OCI-LY7 (cell line): ENCODE measurements at regions of chr10 and their contacts with region 1.

Region 1: DNA sequence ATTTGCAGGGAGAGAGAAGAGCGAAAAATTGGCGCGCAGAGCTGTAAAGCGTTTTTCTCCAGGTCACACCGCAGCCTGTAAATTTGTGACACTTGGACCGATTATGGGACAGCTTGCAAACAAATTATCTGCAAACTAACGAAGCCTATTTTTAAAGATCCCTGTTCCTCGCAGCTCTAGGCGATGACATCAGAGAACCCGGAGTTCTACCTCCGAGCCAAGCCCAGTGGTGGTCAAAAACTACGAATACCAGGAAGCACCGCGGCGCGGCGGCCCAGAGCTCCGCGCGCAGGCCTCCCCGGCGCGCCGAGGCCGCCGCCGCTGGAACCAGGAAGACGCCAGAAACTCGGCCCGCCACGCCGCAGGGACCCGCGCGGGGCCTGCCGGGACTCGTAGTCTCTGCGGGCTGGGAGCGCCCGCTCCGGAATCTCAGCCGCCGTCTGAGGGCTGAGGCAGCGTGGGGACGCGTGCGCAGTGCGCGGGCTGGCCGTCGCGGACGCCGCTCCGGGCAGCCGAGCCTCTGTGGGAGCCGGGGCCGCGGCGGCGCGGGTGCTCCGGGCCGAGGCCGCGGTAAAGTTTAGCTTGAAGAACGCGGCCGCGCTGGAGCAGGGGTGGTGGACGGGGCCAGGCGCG is at the start of gene PLEKHA1:
- DNase-seq: peak; percentile 94
- H3K4me3 ChIP-seq: peak within 1 kb of the TSS; percentile 79
- H3K27ac ChIP-seq: no peak within 1 kb of the TSS
- H3K4me1 ChIP-seq: peaks cover 13% of the 10 kb centered on the region
- CTCF ChIP-seq: no peak
- total RNA-seq, gene PLEKHA1: 4.2 and 7.3 TPM in 2 replicates

Region 2: DNA sequence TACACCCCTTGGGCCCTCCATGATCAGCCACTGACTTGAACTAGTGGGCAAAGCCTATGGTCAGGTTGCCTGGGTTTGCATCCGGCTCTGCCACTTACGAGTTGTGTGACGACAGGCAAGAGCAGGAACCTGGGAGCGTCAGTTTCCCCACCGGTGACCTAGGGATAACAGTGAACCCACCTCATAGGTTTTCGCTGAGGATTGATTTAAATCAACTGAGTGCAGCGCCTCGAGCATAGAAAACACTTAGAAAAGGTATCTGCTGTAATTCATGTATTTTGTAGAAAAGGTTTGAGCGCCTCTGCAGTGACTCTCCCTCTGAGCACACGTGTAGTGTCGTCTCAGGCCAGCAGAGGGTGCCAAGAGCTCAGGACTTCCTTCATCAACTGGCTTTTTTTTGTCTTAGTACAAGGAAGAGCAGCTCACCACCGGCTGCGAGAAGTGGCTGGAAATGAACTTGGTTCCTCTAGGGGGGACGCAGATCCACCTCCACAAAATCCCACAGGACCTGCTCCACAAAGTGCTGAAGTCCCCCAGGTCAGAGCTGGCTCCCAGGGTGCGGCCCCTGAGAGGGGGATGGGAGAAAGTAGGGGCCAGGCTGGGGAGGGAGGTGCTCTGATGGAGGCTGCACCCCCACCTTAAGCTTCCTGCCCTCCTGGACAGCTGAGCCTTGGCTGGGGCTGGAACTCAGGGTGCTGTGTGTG is 75.6 kb before region 1 on chr10:
- CTCF ChIA-PET with region 1: no interaction called
- POLR2A ChIA-PET with region 1: interaction called, 3 read pairs
- intact Hi-C with region 1: loop called (anchors 2 kb)
- DNase-seq: peak; percentile 84
- H3K4me3 ChIP-seq: peak overlapping the region; percentile 37
- H3K27ac ChIP-seq: no peak overlapping the region
- H3K4me1 ChIP-seq: peaks cover 8% of the 10 kb centered on the region
- CTCF ChIP-seq: peak; percentile 95

Region 3: GRCh38 chr10:122307669-122308486 is 66.5 kb before region 1 on chr10:
- CTCF ChIA-PET with region 1: no interaction called
- POLR2A ChIA-PET with region 1: interaction called, 3 read pairs
- intact Hi-C with region 1: loop called (anchors 2 kb)
- DNase-seq: peak; percentile 82
- H3K4me3 ChIP-seq: peak overlapping the region; percentile 45
- H3K27ac ChIP-seq: peak overlapping the region; percentile 79
- H3K4me1 ChIP-seq: peaks cover 32% of the 10 kb centered on the region
- CTCF ChIP-seq: no peak

Region 4: GRCh38 chr10:122348512-122348911 is 25.8 kb before region 1 on chr10:
- CTCF ChIA-PET with region 1: no interaction called
- POLR2A ChIA-PET with region 1: interaction called, 4 read pairs
- intact Hi-C with region 1: loop called (anchors 2 kb)
- DNase-seq: peak; percentile 91
- H3K4me3 ChIP-seq: peak overlapping the region; percentile 32
- H3K27ac ChIP-seq: peak overlapping the region; percentile 77
- H3K4me1 ChIP-seq: peaks cover 39% of the 10 kb centered on the region
- CTCF ChIP-seq: no peak

Region 5: GRCh38 chr10:122713091-122713885 is 338.9 kb after region 1 on chr10:
- CTCF ChIA-PET with region 1: no interaction called
- POLR2A ChIA-PET with region 1: no interaction called
- intact Hi-C with region 1: no loop called
- DNase-seq: no peak
- H3K4me3 ChIP-seq: no peak overlapping the region
- H3K27ac ChIP-seq: no peak overlapping the region
- H3K4me1 ChIP-seq: no peaks in the 10 kb centered on the region
- CTCF ChIP-seq: no peak

Region 6: DNA sequence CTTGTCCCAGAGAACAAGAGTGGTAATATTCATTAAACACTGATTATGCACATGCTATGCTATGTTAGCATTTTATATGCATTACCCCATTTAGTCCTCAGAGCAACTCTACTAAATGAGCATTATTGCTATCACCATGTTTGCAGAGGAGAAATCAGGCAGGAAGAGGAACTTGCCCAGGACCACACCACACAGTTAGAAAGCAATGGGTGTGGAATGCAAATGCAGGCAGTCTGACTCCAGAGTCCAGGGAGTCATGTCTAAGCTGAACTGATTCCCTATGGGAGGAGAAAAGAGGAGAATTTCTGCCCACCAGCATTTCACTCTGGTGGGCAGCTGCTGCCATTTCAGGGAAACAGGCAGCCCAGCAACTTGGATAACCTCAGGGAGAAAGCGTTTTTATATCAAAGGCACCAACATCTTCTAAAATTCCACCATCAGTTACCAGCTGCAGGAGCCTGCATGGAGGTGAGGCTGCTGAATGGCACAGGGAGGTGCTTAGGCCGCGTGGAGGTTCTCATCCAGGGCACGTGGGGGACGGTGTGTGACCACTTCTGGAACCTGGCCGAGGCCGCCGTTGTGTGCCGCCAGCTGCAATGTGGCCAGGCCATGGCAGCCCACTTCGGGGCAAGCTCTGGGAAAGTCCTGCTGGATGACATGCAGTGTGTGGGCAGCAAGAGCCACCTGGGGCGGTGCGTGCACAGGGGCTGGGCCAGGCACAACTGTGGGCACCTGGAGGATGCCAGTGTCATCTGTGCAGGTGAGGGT is 393.5 kb after region 1 on chr10:
- CTCF ChIA-PET with region 1: no interaction called
- POLR2A ChIA-PET with region 1: no interaction called
- intact Hi-C with region 1: no loop called
- DNase-seq: no peak
- H3K4me3 ChIP-seq: no peak overlapping the region
- H3K27ac ChIP-seq: no peak overlapping the region
- H3K4me1 ChIP-seq: no peaks in the 10 kb centered on the region
- CTCF ChIP-seq: no peak

Region 7: GRCh38 chr10:123154092-123154921 is 780.0 kb after region 1 on chr10 and contains the start of gene BUB3:
- CTCF ChIA-PET with region 1: no interaction called
- POLR2A ChIA-PET with region 1: no interaction called
- intact Hi-C with region 1: loop called (anchors 10 kb)
- DNase-seq: peak; percentile 99
- H3K4me3 ChIP-seq: peak within 1 kb of the TSS; percentile 92
- H3K27ac ChIP-seq: peak within 1 kb of the TSS; percentile 83
- H3K4me1 ChIP-seq: peaks cover 54% of the 10 kb centered on the region
- CTCF ChIP-seq: no peak
- total RNA-seq, gene BUB3: 437 and 526 TPM in 2 replicates